Right cardiac atrium (tissue), 5 donors: ENCODE measurements at regions of chr6 and their contacts with region 1.

Region 1: DNA sequence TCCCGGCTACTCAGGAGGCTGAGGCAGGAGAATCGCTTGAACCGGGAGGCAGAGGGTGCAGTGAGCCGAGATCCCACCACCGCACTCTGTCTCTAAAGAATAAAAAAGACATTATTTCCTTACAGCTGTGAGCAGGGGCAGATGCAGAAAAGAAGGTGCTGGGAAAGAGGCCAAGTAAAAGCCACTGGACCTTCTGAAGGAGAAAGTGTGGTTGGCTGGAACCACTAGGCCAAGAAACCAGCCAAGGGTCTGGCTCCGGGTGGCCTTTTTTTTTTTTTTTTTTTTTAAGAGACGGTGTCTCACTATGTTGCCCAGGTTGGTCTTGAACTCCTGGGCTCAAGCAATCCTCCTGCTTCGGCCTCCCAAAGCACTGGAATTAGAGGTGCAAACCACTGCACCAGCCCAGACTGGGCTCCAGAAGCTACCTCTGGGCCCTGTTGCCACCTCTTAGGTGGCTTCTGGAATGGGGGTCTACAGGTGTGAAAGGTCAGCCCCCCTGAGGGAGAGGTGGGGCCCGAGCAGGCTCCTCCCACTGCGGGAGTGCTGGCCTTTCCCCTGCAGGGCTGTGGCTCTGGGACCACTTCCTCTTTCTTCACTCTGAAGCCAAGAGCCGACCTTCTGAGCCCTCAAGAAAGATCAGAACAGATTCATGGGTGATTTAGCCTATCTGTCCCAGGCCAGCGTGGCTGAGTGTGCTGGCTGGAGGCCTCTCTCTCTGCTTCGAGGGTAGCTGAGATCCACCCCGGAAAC is at the start of gene FGD2:
- DNase-seq: no peak
- ATAC-seq: peak; percentile 8 to 9
- H3K4me3 ChIP-seq: peak within 1 kb of the TSS; percentile 6
- H3K27ac ChIP-seq: no peak within 1 kb of the TSS
- H3K4me1 ChIP-seq: no peaks in the 10 kb centered on the region
- H3K27me3 ChIP-seq: no peaks in the 10 kb centered on the region
- total RNA-seq, gene FGD2: 6.4 to 14.0 (median 10.7) TPM

Region 2: GRCh38 chr6:36820700-36821580 is 184.3 kb before region 1 on chr6:
- intact Hi-C with region 1: no loop called
- DNase-seq: peak in 1 of 3 donors; percentile 41
- ATAC-seq: no peak
- H3K4me3 ChIP-seq: no peak overlapping the region
- H3K27ac ChIP-seq: no peak overlapping the region
- H3K4me1 ChIP-seq: peaks cover 21% of the 10 kb centered on the region
- H3K27me3 ChIP-seq: no peaks in the 10 kb centered on the region

Region 3: GRCh38 chr6:36897609-36898008 is 107.6 kb before region 1 on chr6:
- intact Hi-C with region 1: loop called in 1 of 4 experiments (anchors 10 kb)
- DNase-seq: no peak
- ATAC-seq: peak in 1 of 2 donors; percentile 63
- H3K4me3 ChIP-seq: no peak overlapping the region
- H3K27ac ChIP-seq: no peak overlapping the region
- H3K4me1 ChIP-seq: no peaks in the 10 kb centered on the region
- H3K27me3 ChIP-seq: no peaks in the 10 kb centered on the region